Caco-2 (cell line): ENCODE measurements at regions of chr5 and their contacts with region 1.

Region 1: DNA sequence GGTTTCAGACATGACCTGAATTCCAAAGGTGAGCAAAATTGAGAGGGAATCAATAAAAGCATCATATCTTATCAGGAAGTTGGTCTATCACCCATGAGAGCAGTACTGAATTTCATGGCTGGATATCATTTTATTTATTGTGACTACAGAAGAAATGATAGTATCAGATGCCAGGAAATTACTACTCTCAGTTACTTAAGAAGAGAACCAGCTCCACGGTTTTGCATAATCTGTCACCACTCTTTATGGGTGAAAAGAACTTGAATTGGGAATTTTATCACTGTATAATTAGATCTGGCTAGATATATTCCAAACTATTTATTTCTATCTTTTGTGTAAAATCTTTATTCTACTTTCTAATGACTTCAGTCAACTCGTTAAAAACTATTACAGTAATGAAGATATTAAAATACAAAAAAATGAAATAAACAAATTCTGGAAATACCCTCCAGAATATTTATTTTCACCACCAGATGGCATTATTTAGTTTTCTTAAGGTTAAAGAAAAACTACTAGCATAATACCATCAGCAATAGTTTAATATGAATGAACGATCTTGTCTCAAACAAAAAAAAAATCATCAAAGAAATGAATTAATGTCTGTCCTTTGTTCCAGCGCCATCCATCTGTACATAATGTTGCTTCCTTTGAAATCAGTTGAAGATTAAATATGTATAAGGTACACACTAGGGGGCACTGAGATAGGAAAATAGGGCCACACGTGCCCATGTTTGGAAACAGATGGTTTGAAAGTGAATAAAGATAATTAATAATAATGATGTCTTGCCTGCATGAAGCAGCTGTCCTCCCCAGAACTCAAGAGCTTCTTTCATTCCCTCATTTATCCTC is 84.7 kb upstream of the SLCO6A1 start:
- DNase-seq: no peak
- H3K4me3 ChIP-seq: no peak overlapping the region
- H3K4me3 Mint-ChIP-seq: no peak overlapping the region
- H3K27ac Mint-ChIP-seq: no peak overlapping the region
- H3K4me1 ChIP-seq: no peaks in the 10 kb centered on the region
- H3K4me1 Mint-ChIP-seq: no peaks in the 10 kb centered on the region
- H3K27me3 ChIP-seq: no peaks in the 10 kb centered on the region
- H3K27me3 Mint-ChIP-seq: no peaks in the 10 kb centered on the region
- CTCF ChIP-seq: peak in 1 of 2 experiments; percentile 63

Region 2: DNA sequence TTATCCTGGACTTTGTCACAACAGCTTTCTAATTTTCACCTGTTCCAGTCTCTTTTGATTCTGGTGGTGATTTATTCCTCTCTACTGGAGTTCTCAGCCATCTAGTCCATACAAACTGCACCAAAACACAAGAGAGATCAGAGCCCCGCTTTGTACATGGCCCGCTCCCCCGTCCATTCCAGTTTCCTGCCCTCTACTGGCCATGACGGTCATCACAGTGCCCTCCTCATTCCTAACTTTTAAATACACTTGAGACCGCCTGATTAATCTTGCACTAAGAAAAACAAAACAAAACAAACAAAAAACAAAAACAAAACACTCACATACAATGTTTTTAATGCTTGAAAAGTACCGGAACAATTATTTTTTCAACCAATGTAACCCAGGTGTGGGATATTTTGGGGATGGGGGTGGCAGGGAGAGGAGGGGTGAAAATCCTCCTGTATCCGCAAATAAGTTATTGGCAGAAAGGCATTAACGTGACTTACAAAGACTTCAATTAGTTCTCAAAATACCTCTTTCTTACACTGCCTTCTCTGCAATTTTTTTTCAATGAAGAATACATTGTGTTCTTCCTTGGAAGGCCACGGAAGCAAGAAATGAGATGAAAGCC is 86.8 kb after region 1 on chr5:
- CTCF ChIA-PET with region 1: no interaction called
- POLR2A ChIA-PET with region 1: no interaction called
- intact Hi-C with region 1: loop called (anchors 1 kb)
- DNase-seq: peak; percentile 57 to 58
- H3K4me3 ChIP-seq: peak overlapping the region; percentile 55
- H3K4me3 Mint-ChIP-seq: peak overlapping the region; percentile 93
- H3K27ac Mint-ChIP-seq: peak overlapping the region; percentile 57
- H3K4me1 ChIP-seq: peaks cover 6% of the 10 kb centered on the region; the same call in 1 of the 2 replicates
- H3K4me1 Mint-ChIP-seq: peaks cover 6% of the 10 kb centered on the region
- H3K27me3 ChIP-seq: no peaks in the 10 kb centered on the region
- H3K27me3 Mint-ChIP-seq: no peaks in the 10 kb centered on the region
- CTCF ChIP-seq: peak; percentile 70 to 82

Region 3: GRCh38 chr5:102792705-102793104 is 209.2 kb after region 1 on chr5:
- CTCF ChIA-PET with region 1: no interaction called
- POLR2A ChIA-PET with region 1: no interaction called
- intact Hi-C with region 1: loop called (anchors 5 kb)
- DNase-seq: no peak
- H3K4me3 ChIP-seq: no peak overlapping the region
- H3K4me3 Mint-ChIP-seq: no peak overlapping the region
- H3K27ac Mint-ChIP-seq: no peak overlapping the region
- H3K4me1 ChIP-seq: peaks cover 39% of the 10 kb centered on the region
- H3K4me1 Mint-ChIP-seq: peaks cover 14% of the 10 kb centered on the region
- H3K27me3 ChIP-seq: no peaks in the 10 kb centered on the region
- H3K27me3 Mint-ChIP-seq: no peaks in the 10 kb centered on the region
- CTCF ChIP-seq: peak; percentile 10 to 16

Region 4: GRCh38 chr5:102971697-102972293 is 388.3 kb after region 1 on chr5:
- CTCF ChIA-PET with region 1: no interaction called
- POLR2A ChIA-PET with region 1: no interaction called
- intact Hi-C with region 1: loop called (anchors 10 kb)
- DNase-seq: peak in 1 of 2 experiments; percentile 6
- H3K4me3 ChIP-seq: no peak overlapping the region
- H3K4me3 Mint-ChIP-seq: no peak overlapping the region
- H3K27ac Mint-ChIP-seq: no peak overlapping the region
- H3K4me1 ChIP-seq: no peaks in the 10 kb centered on the region
- H3K4me1 Mint-ChIP-seq: no peaks in the 10 kb centered on the region
- H3K27me3 ChIP-seq: no peaks in the 10 kb centered on the region
- H3K27me3 Mint-ChIP-seq: no peaks in the 10 kb centered on the region
- CTCF ChIP-seq: peak in 1 of 2 experiments; percentile 47

Region 5: GRCh38 chr5:103139264-103139865 is 555.9 kb after region 1 on chr5:
- CTCF ChIA-PET with region 1: no interaction called
- POLR2A ChIA-PET with region 1: no interaction called
- intact Hi-C with region 1: loop called (anchors 1 kb)
- DNase-seq: peak; percentile 78 to 84
- H3K4me3 ChIP-seq: no peak overlapping the region
- H3K4me3 Mint-ChIP-seq: no peak overlapping the region
- H3K27ac Mint-ChIP-seq: no peak overlapping the region
- H3K4me1 ChIP-seq: peaks cover 22% of the 10 kb centered on the region
- H3K4me1 Mint-ChIP-seq: no peaks in the 10 kb centered on the region
- H3K27me3 ChIP-seq: no peaks in the 10 kb centered on the region
- H3K27me3 Mint-ChIP-seq: no peaks in the 10 kb centered on the region
- CTCF ChIP-seq: peak; percentile 92 to 93